Tibial artery (tissue), 4 donors: ENCODE measurements at regions of chr9 and their contacts with region 1.

Region 1: DNA sequence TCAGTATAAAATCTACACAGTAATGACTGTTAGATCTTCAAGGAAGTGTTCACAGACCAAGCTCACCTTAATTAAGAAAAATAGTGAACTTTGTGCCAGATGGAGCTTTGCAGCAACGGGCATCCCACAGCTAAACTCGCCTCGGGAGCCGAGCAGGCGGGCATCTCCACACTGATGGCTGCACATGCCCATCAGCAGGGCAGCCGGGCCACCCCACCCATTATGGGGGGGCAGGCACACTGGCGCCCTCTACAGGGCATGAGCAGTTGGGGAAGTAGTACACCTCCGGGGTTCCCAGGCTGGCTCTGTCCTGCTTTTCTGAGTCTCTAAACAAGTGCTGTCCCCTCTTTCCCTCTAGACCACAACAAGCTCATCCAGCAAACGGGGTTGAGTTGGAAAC is 21.6 kb downstream of the ANKS6 start:
- DNase-seq: no peak
- H3K4me3 ChIP-seq: no peak overlapping the region
- H3K27ac ChIP-seq: no peak overlapping the region
- H3K4me1 ChIP-seq: no peaks in the 10 kb centered on the region
- H3K27me3 ChIP-seq: no peaks in the 10 kb centered on the region
- CTCF ChIP-seq: no peak

Region 2: DNA sequence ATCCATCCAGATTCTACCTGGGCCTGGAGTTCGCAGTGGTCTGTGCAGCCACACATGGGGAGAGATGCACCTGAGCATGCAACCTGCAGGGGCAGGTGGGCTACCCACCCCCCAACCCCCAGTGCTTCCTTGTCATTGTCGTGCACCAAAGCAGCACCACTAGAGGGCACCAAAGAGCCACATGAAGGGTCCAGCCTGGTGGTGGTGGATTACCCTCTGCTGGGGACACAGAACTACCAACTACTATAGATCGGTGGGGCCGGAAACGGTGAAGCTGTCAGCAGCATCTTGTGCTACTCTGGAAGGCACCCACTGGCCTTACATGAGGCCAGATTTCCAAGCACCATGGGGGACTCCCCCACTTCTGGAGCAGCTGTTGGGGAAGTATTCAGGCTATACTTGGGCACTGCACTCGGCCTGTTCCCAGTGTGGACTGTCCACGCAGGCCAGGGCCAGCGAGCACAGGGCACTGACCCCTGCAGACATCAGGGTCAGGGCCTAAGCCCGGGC is 459.1 kb before region 1 on chr9:
- intact Hi-C with region 1: loop called (anchors 5 kb)
- DNase-seq: peak; percentile 74 to 75
- H3K4me3 ChIP-seq: no peak overlapping the region
- H3K27ac ChIP-seq: no peak overlapping the region
- H3K4me1 ChIP-seq: no peaks in the 10 kb centered on the region
- H3K27me3 ChIP-seq: peaks cover 0 to 6% of the 10 kb centered on the region in 2 donors
- CTCF ChIP-seq: peak; percentile 73 to 84

Region 3: GRCh38 chr9:98873951-98874371 is 99.2 kb after region 1 on chr9:
- intact Hi-C with region 1: no loop called
- DNase-seq: peak; percentile 67 to 84
- H3K4me3 ChIP-seq: no peak overlapping the region
- H3K27ac ChIP-seq: no peak overlapping the region
- H3K4me1 ChIP-seq: peaks cover 0 to 26% (median 24%) of the 10 kb centered on the region in 4 donors
- H3K27me3 ChIP-seq: no peaks in the 10 kb centered on the region
- CTCF ChIP-seq: no peak

Region 4: GRCh38 chr9:98899408-98900056 is 124.8 kb after region 1 on chr9:
- intact Hi-C with region 1: no loop called
- DNase-seq: no peak
- H3K4me3 ChIP-seq: no peak overlapping the region
- H3K27ac ChIP-seq: no peak overlapping the region
- H3K4me1 ChIP-seq: peaks cover 0 to 4% (median 2%) of the 10 kb centered on the region in 4 donors
- H3K27me3 ChIP-seq: no peaks in the 10 kb centered on the region
- CTCF ChIP-seq: no peak

Region 5: DNA sequence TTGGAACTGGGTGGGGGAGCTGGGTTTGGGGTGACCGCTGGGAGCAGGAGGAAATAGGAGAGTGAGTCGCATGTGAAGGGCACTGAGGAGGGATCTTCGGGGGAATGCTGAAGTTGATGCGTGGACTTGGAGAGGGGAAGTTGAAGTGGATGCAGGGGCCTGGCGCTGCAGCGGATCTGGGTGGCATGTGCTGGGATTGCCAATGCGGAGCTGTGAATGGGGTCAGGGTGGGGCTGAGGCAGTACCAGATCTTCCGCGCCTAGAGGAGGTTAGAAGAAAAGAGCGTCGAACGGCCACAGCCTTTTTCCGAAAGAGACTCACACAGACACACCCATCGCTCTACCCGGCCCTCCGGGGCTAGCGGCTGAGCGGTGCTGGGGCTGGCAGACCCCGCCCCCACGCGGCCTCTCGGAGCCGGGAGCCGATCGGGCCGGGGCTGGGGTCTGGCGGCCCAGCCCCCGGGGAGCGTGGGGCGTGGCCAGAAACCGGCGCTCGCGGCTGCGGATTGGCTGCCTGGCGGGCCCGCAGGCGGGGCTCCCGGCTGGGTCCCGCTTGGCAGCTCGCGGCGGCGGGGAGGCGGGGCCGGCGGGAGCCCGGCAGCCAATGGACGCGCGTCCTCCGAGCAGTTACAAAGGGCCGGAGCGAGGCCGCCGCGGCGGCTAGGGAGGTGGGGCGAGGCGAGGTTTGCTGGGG is 329.9 kb after region 1 on chr9 and contains the start of gene TGFBR1:
- intact Hi-C with region 1: no loop called
- DNase-seq: peak; percentile 92 to 97
- H3K4me3 ChIP-seq: peak within 1 kb of the TSS; percentile 89 to 96
- H3K27ac ChIP-seq: peak within 1 kb of the TSS; percentile 97 to 98
- H3K4me1 ChIP-seq: peaks cover 0 to 59% (median 34%) of the 10 kb centered on the region in 4 donors
- H3K27me3 ChIP-seq: no peaks in the 10 kb centered on the region
- CTCF ChIP-seq: peak in 1 of 2 experiments; percentile 6